PC-9 (cell line): ENCODE measurements at regions of chr1 and their contacts with region 1.

Region 1: GRCh38 chr1:244272471-244273261 is 179.0 kb downstream of the ADSS2 start:
- DNase-seq: peak; percentile 70 to 77
- H3K4me3 ChIP-seq: no peak overlapping the region
- H3K27ac ChIP-seq: peak overlapping the region; percentile 14; the same call in 1 of the 2 replicates
- H3K4me1 ChIP-seq: peaks cover 25% of the 10 kb centered on the region
- H3K27me3 ChIP-seq: no peaks in the 10 kb centered on the region
- CTCF ChIP-seq: peak; percentile 98

Region 2: DNA sequence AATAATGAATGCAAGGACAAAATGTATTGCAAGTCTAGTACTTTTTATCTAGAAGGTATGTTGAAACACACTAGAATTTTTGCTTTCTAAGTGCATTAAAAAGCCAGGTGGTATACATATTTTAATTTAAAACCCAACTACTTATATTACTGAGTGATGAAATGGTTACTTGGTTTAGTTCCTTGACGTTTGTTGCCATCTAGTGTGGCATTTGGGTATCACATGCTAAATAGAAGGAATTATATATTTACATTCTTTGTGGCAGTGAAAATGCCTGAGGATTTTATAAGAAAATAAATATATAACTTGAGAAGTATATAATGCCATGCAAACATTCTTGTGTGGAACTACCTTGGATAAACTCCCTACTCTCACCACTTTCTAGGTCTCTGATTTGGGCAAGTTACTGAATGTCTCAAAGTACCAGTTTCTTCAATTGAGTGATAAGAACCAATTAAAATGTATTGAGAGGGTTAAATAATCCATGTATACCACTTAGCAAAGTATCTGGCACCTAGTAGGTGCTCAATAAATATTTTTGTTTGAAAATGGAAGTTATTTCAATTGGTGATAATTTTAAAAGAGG is 947.3 kb before region 1 on chr1:
- CTCF ChIA-PET with region 1: no interaction called
- POLR2A ChIA-PET with region 1: no interaction called
- intact Hi-C with region 1: loop called (anchors 5 kb)
- DNase-seq: peak in 1 of 2 experiments; percentile 44
- H3K4me3 ChIP-seq: no peak overlapping the region
- H3K27ac ChIP-seq: no peak overlapping the region
- H3K4me1 ChIP-seq: no peaks in the 10 kb centered on the region
- H3K27me3 ChIP-seq: no peaks in the 10 kb centered on the region
- CTCF ChIP-seq: peak; percentile 91

Region 3: GRCh38 chr1:243748706-243749283 is 523.9 kb before region 1 on chr1:
- CTCF ChIA-PET with region 1: no interaction called
- POLR2A ChIA-PET with region 1: no interaction called
- intact Hi-C with region 1: loop called (anchors 2 kb)
- DNase-seq: peak; percentile 7 to 67
- H3K4me3 ChIP-seq: no peak overlapping the region
- H3K27ac ChIP-seq: peak overlapping the region; percentile 10; the same call in 1 of the 2 replicates
- H3K4me1 ChIP-seq: no peaks in the 10 kb centered on the region
- H3K27me3 ChIP-seq: no peaks in the 10 kb centered on the region
- CTCF ChIP-seq: peak; percentile 83

Region 4: GRCh38 chr1:243946946-243947345 is 325.7 kb before region 1 on chr1:
- CTCF ChIA-PET with region 1: no interaction called
- POLR2A ChIA-PET with region 1: no interaction called
- intact Hi-C with region 1: loop called (anchors 5 kb)
- DNase-seq: no peak
- H3K4me3 ChIP-seq: no peak overlapping the region
- H3K27ac ChIP-seq: no peak overlapping the region
- H3K4me1 ChIP-seq: peaks cover 19% of the 10 kb centered on the region
- H3K27me3 ChIP-seq: no peaks in the 10 kb centered on the region
- CTCF ChIP-seq: peak; percentile 69

Region 5: GRCh38 chr1:244104309-244105060 is 168.2 kb before region 1 on chr1:
- CTCF ChIA-PET with region 1: interaction called, 5 read pairs
- POLR2A ChIA-PET with region 1: no interaction called
- intact Hi-C with region 1: loop called (anchors 1 kb)
- DNase-seq: peak; percentile 73 to 92
- H3K4me3 ChIP-seq: peak overlapping the region; percentile 35; the same call in 1 of the 2 replicates
- H3K27ac ChIP-seq: peak overlapping the region; percentile 62
- H3K4me1 ChIP-seq: peaks cover 25% of the 10 kb centered on the region
- H3K27me3 ChIP-seq: no peaks in the 10 kb centered on the region
- CTCF ChIP-seq: no peak

Region 6: DNA sequence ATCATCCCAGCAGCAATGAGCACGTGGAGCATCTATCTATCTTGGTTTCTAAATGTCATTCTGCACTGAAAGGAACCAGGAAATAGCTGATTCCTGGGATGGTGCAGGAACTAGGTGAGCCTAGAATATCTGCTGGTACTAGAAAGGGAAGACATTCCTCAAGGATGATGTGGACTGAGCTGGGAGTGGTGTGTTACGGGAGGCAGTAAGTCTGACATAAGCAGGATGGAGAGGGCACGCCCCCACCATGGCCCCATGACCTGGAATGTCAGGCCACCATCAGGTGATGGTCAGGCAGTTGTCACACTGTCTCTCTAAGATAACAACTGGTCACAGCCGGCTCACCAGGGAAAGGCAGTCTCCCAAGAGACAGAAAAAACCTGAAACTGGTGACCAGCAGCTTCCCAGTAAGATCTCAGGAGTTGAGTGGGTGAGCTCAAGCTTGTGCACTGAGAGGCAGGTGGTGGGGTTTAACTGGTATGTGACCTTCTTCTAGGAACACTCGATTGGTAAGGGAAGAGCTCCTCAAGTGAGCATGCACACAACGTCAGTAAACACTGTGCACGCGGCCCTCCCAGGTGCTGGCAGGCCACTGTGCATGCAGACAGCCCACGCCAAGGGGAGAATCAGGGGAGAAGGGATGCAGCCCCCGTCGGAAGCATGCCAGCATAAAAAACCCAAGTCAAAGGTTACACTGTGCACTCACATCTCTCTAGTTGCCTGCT is 30.4 kb after region 1 on chr1:
- CTCF ChIA-PET with region 1: interaction called, 3 read pairs
- POLR2A ChIA-PET with region 1: interaction called, 3 read pairs
- intact Hi-C with region 1: loop called (anchors 1 kb)
- DNase-seq: peak; percentile 84 to 92
- H3K4me3 ChIP-seq: no peak overlapping the region
- H3K27ac ChIP-seq: peak overlapping the region; percentile 69
- H3K4me1 ChIP-seq: peaks cover 39% of the 10 kb centered on the region
- H3K27me3 ChIP-seq: no peaks in the 10 kb centered on the region
- CTCF ChIP-seq: no peak

Region 7: DNA sequence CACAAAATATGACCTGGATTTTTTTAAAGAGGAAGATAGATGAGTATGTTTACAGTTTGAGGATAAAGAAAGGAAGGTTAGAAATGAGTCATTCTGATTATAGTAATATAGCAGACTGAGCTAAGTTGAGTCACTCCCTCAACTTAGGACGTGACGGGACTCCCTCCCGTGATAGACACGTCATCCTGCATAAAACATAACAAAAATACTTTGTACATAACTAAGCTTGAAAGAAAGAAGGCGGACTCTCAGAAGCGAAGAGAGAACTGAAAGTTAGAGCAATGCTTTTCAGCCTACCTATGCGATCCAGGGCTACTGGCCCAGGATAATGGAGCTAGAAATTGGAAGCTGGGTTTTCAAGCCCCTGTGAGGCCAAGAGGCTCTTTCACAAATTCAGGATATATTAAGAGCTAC is 327.3 kb after region 1 on chr1:
- CTCF ChIA-PET with region 1: interaction called, 12 read pairs
- POLR2A ChIA-PET with region 1: no interaction called
- intact Hi-C with region 1: no loop called
- DNase-seq: peak; percentile 43 to 91
- H3K4me3 ChIP-seq: peak overlapping the region; percentile 57; the same call in 1 of the 2 replicates
- H3K27ac ChIP-seq: peak overlapping the region; percentile 79
- H3K4me1 ChIP-seq: peaks cover 18% of the 10 kb centered on the region
- H3K27me3 ChIP-seq: no peaks in the 10 kb centered on the region
- CTCF ChIP-seq: no peak